Activated B cell treated with CpG ODN at 0.5 μM for 24 hours (primary cell): ENCODE measurements at regions of chr7 and their contacts with region 1.

Region 1: DNA sequence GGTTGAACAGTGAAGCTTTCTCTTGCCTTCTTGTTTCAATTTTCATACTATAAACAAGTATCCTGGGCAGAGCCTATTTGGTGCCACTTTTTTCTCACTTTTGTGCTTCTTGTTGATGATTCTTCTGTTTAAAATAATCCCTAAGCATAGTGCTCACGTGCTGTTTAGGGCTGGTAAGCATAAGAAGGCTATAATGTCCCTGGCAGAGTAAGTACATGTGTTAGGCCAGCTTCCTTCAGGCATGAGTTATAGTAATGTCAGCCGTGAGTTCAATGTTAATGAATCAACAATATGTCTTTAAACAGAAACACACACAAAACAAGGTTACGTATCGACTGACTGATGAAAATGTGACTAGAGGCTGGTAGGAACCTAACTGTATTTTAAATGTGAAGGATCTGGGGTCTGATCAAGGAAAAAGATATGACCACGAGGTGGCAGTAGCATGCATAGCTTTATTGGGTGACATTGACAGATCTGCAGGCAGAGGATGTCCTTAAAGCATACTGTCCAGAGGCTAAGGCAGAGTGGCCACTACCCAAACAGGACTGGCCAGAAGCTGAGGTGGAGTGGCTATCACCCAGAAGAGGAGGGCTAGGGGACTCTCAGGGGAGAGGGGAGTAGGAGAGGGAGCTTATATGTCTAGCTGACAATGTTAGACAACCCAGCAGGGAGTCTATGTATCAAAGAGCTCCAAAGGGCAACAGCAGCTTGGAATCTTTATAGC is 113.7 kb downstream of the BRAF start:
- DNase-seq: peak; percentile 30
- ATAC-seq: peak; percentile 84
- H3K4me3 Mint-ChIP-seq: no peak overlapping the region
- H3K27ac Mint-ChIP-seq: peak overlapping the region; percentile 59
- H3K4me1 Mint-ChIP-seq: peaks cover 1% of the 10 kb centered on the region
- H3K27me3 Mint-ChIP-seq: no peaks in the 10 kb centered on the region
- CTCF ChIP-seq: no peak

Region 2: DNA sequence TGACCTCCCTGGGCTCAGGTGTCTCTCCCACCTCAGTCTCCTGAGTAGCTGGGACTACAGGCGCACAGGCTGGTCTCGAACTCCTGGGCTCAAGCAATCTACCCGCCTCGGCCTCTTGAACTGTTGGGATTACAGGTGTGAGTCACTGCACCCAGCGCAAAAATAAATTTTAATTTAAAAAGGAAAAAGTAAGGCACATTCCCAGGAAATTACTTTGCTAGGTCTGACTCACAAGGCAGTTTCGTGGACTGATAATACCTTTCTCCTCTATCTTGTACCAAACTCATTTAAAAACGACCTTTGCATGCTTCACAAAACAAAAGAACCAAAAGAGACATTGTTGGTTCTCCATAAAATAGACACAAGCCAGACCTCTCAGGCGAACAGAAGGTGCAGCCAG is 778.0 kb before region 1 on chr7:
- CTCF ChIA-PET with region 1: no interaction called
- POLR2A ChIA-PET with region 1: no interaction called
- intact Hi-C with region 1: no loop called
- DNase-seq: no peak
- ATAC-seq: no peak
- H3K4me3 Mint-ChIP-seq: no peak overlapping the region
- H3K27ac Mint-ChIP-seq: no peak overlapping the region
- H3K4me1 Mint-ChIP-seq: peaks cover 24% of the 10 kb centered on the region
- H3K27me3 Mint-ChIP-seq: no peaks in the 10 kb centered on the region
- CTCF ChIP-seq: no peak

Region 3: GRCh38 chr7:140983802-140984201 is 172.8 kb after region 1 on chr7:
- CTCF ChIA-PET with region 1: interaction called, 16 read pairs
- POLR2A ChIA-PET with region 1: no interaction called
- intact Hi-C with region 1: no loop called
- DNase-seq: no peak
- ATAC-seq: no peak
- H3K4me3 Mint-ChIP-seq: no peak overlapping the region
- H3K27ac Mint-ChIP-seq: no peak overlapping the region
- H3K4me1 Mint-ChIP-seq: no peaks in the 10 kb centered on the region
- H3K27me3 Mint-ChIP-seq: peaks cover 24% of the 10 kb centered on the region
- CTCF ChIP-seq: no peak

Region 4: DNA sequence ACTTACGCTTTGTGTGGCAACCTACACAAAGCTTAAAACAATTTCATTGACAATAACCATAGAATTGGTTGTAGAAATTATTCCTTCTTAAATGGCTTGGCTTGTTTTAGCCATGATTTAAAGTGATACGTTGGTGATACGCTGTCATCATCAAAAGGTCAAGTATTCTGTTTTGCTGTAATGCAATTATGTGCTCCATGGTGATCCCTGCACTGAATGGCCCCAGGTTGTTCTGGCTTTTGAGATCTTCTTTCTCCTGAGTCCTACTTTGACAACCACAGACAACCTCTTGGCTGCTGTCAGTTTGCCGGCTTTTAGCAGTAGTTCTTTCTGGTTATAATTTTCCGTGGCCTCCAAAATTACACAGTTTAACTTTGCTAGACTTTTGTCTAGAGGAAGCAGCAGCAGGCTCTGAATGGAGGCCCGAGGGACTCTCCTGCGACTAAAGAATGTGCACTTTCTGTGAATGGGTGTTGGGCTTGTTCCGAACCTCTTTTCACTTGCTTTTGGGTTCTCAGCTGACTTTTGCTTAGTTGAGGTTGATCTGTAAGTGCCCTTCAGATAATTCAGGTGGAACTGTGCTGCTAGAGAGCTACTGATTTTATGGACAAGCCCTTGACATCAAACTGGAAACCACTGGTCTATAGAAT is 367.6 kb after region 1 on chr7:
- CTCF ChIA-PET with region 1: no interaction called
- POLR2A ChIA-PET with region 1: no interaction called
- intact Hi-C with region 1: no loop called
- DNase-seq: no peak
- ATAC-seq: no peak
- H3K4me3 Mint-ChIP-seq: no peak overlapping the region
- H3K27ac Mint-ChIP-seq: no peak overlapping the region
- H3K4me1 Mint-ChIP-seq: peaks cover 8% of the 10 kb centered on the region
- H3K27me3 Mint-ChIP-seq: no peaks in the 10 kb centered on the region
- CTCF ChIP-seq: no peak

Region 5: GRCh38 chr7:141231018-141231792 is 420.2 kb after region 1 on chr7:
- CTCF ChIA-PET with region 1: interaction called, 4 read pairs
- POLR2A ChIA-PET with region 1: no interaction called
- intact Hi-C with region 1: loop called (anchors 2 kb)
- DNase-seq: no peak
- ATAC-seq: no peak
- H3K4me3 Mint-ChIP-seq: no peak overlapping the region
- H3K27ac Mint-ChIP-seq: no peak overlapping the region
- H3K4me1 Mint-ChIP-seq: peaks cover under 1% of the 10 kb centered on the region
- H3K27me3 Mint-ChIP-seq: peaks cover 4% of the 10 kb centered on the region
- CTCF ChIP-seq: no peak